Upper lobe of right lung (tissue), 1 donor: ENCODE measurements at regions of chr11 and their contacts with region 1.

Region 1: DNA sequence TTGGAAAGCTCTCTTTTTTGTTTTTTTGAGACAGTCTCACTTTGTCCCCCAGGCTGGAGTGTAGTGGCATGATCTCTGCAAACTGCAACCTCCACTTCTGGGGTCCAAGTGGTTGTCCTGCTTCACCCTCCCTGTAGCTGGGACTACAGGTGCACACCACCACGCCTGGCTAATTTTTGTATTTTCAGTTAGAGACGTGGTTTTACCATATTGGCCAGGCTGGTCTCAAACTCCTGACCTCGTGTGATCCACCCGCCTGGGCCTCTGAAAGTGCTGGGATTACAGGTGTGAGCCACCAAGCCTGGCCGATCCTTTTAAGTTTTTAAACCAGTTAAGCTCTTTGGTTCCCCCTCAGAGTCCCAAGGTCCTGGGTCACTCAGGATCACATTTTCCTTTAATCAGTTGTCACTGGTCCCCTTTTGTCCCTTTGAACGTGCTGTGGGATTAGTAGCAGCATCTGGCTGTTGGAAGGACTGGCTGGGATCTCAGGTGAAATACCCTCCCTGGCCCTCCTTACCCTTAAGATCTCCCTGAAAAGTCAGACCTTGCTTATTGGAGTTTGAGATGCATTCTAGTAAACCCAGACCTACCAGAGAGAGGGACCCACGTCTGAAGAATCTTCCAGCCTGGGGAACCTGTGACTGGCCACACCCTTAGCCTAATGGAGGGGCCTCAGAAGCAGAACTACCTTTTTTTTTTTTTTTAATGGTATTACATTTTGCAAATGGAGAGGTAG is 8.1 kb downstream of the MALAT1 start:
- DNase-seq: peak; percentile 67
- ATAC-seq: peak; percentile 2
- H3K4me3 ChIP-seq: peak overlapping the region; percentile 79
- H3K27ac ChIP-seq: peak overlapping the region; percentile 100
- H3K4me1 ChIP-seq: peaks cover 37% of the 10 kb centered on the region
- H3K27me3 ChIP-seq: no peaks in the 10 kb centered on the region
- CTCF ChIP-seq: no peak

Region 2: DNA sequence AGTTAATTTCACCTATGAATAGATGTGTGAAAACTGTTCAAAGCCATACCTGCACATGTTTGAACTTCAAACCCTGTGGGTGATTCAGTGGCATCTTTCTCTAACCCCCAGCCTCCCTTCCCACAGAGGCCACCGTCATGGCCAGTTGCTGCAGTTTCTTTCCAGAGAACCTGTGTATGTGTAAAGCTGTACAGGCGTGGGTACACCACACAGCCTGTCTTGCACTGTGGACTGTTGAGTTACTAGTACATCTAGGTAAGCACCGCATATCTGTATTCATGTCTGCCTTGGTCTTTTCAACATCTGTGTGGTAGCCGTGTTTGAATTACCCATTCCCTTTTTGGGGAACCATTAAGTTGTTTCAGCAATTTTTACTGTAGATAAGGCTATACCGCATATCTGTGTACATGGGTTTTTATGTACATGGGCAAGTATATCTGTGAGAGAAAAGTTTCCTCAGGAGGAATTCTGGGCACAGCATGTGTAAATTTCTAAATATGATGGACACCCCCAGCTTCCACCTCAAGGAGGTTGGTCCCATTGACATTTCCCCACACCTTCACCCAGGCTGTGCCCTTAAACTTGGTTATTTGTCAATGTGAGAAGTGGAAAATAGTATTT is 70.4 kb before region 1 on chr11:
- intact Hi-C with region 1: no loop called
- DNase-seq: peak; percentile 34
- ATAC-seq: peak; percentile 7
- H3K4me3 ChIP-seq: peak overlapping the region; percentile 6
- H3K27ac ChIP-seq: no peak overlapping the region
- H3K4me1 ChIP-seq: peaks cover 73% of the 10 kb centered on the region
- H3K27me3 ChIP-seq: no peaks in the 10 kb centered on the region
- CTCF ChIP-seq: no peak

Region 3: DNA sequence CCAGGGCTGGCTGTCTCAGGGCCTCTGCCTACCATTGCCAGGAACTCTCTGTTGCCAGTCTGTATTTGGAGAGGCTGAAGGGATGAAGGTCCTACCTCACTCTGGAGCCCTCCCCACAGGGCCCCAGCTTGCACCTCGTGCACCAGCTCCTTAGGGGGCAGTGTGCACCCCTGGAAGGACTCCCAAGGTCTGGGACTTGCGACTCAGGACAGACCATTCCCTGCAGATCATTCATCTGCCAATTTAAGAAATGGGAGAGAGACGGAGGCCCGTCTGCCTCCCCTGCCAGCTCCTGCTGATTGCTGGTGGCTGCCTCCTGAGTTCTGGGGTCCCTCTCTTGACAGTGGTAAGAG is 35.6 kb before region 1 on chr11:
- intact Hi-C with region 1: loop called (anchors 5 kb)
- DNase-seq: peak; percentile 89
- ATAC-seq: peak; percentile 92
- H3K4me3 ChIP-seq: peak overlapping the region; percentile 25
- H3K27ac ChIP-seq: peak overlapping the region; percentile 90
- H3K4me1 ChIP-seq: peaks cover 27% of the 10 kb centered on the region
- H3K27me3 ChIP-seq: no peaks in the 10 kb centered on the region
- CTCF ChIP-seq: peak; percentile 80

Region 4: DNA sequence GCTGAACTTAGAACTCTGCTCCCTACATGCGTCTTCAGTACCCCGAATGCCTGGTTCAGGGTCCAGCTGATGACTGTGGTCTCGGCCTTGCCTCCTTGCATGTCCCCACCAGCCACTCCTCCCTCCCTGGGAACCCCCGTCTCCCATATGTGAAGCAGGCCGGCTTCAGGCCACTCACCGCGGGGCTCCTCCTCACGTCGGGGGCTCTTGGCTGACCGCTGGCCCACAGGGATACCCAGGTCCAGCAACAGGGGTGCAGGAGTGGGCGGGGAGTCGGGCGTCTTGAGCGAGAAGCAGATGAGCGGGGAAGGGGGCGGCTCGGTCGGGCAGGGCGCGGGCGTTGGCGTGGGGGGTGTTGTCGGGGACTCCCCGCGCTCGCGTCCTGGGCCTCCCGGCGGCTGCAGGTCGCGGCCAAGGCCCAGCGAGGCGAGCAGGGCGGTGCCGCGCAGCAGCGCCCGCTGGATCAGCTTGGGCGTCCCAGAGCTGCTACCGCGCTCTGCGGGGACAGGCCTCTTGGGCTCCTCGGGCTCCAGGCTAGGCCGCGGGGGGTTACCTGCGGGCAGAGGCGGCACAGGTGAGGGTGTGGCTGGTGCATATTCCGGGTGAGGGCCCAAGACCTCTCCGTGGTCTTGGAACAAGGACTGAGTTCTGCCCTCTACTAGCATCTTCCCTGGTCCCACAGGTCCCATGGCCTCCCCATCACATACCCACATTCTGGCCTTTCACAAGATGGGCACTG is 92.4 kb after region 1 on chr11:
- intact Hi-C with region 1: no loop called
- DNase-seq: no peak
- ATAC-seq: no peak
- H3K4me3 ChIP-seq: no peak overlapping the region
- H3K27ac ChIP-seq: no peak overlapping the region
- H3K4me1 ChIP-seq: no peaks in the 10 kb centered on the region
- H3K27me3 ChIP-seq: no peaks in the 10 kb centered on the region
- CTCF ChIP-seq: no peak